ENCODE measurements at regions of chr4 and their contacts with region 1.

Region 1: GRCh38 chr4:152996108-152996571 is 60.0 kb downstream of the FHDC1 start:
- DNase-seq: peak; percentile 50
- H3K4me3 ChIP-seq: no peak overlapping the region
- H3K27ac ChIP-seq: peak overlapping the region; percentile 22
- H3K4me1 ChIP-seq: peaks cover 38% of the 10 kb centered on the region
- H3K27me3 ChIP-seq: no peaks in the 10 kb centered on the region
- CTCF ChIP-seq: no peak

Region 2: GRCh38 chr4:152937336-152938236 is 58.6 kb before region 1 on chr4:
- CTCF ChIA-PET with region 1: no interaction called
- dilution Hi-C with region 1: no loop called
- in situ Hi-C with region 1: no loop called
- intact Hi-C with region 1: loop called (anchors 1 kb)
- DNase-seq: peak; percentile 58
- H3K4me3 ChIP-seq: peak overlapping the region; percentile 88 to 91 (median 90)
- H3K27ac ChIP-seq: peak overlapping the region; percentile 52
- H3K4me1 ChIP-seq: peaks cover 16% of the 10 kb centered on the region
- H3K27me3 ChIP-seq: no peaks in the 10 kb centered on the region
- CTCF ChIP-seq: no peak

Region 3: GRCh38 chr4:152981278-152981677 is 14.9 kb before region 1 on chr4:
- CTCF ChIA-PET with region 1: no interaction called
- dilution Hi-C with region 1: no loop called
- in situ Hi-C with region 1: no loop called
- intact Hi-C with region 1: loop called (anchors 2 kb)
- DNase-seq: peak; percentile 99
- H3K4me3 ChIP-seq: no peak overlapping the region
- H3K27ac ChIP-seq: peak overlapping the region; percentile 88
- H3K4me1 ChIP-seq: peaks cover 54% of the 10 kb centered on the region
- H3K27me3 ChIP-seq: no peaks in the 10 kb centered on the region
- CTCF ChIP-seq: no peak

Region 4: DNA sequence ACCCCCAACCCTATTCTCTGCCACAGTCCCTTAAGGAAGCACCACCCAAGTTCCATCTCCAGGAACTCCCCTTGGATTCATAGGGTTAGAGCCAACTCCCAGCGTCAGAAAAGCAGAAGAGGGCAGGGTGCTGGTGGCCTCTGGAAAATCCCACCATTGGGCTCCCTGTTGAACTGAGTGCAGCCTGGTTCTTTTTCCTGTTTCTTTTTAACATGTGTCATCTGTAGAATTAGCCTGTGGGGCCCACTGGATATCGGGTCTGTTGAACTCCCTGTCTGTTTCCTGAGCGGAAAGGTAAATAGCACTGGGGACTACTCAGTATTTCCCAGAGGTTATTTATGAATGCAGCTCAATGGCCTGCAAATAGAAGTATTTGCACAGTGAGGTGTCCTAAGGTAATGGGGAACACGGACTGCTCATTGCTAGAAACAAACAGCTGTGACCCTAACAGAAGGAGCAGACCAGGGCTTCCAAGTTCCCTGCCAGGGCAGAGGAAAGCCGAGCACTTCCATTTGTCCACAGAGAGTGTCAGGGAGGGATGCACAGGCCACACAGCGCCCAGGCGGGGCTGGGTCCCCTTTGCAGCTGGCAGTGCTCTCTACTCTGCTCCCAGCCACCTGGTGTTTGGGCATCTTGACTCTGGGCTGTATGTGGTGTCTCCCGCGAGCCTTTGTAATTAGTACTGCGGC is 42.6 kb after region 1 on chr4:
- CTCF ChIA-PET with region 1: no interaction called
- dilution Hi-C with region 1: no loop called
- in situ Hi-C with region 1: no loop called
- intact Hi-C with region 1: loop called (anchors 5 kb)
- DNase-seq: no peak
- H3K4me3 ChIP-seq: no peak overlapping the region
- H3K27ac ChIP-seq: peak overlapping the region; percentile 85
- H3K4me1 ChIP-seq: peaks cover 41% of the 10 kb centered on the region
- H3K27me3 ChIP-seq: no peaks in the 10 kb centered on the region
- CTCF ChIP-seq: no peak

Region 5: GRCh38 chr4:153113061-153113837 is 117.1 kb after region 1 on chr4:
- CTCF ChIA-PET with region 1: no interaction called
- dilution Hi-C with region 1: no loop called
- in situ Hi-C with region 1: no loop called
- intact Hi-C with region 1: no loop called
- DNase-seq: no peak
- H3K4me3 ChIP-seq: no peak overlapping the region
- H3K27ac ChIP-seq: no peak overlapping the region
- H3K4me1 ChIP-seq: peaks cover 13% of the 10 kb centered on the region
- H3K27me3 ChIP-seq: no peaks in the 10 kb centered on the region
- CTCF ChIP-seq: no peak